ENCODE measurements at regions of chr5 and their contacts with region 1.

Region 1: DNA sequence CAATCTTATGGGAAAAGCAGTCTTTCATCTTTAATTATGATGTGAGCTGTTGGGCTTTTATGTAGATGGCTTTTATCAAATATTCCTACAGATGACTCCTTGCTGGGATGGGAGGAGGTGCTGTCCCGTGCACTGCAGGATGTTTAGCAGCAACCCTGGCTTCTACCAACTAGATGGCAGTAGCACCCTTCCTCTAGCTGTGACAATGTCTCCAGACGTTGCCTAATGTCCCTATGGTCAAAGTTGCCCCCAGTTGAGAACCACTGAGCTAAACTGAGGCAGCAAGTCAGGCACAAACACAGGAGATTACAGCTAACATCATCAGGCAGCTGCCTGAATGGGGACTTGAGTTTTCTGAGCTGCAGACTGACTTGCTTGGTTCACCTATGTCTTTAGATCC is 401.9 kb upstream of the PDE4D start:
- DNase-seq: peak; percentile 27
- H3K4me3 ChIP-seq: no peak overlapping the region
- H3K27ac ChIP-seq: no peak overlapping the region
- H3K4me1 ChIP-seq: no peaks in the 10 kb centered on the region
- H3K27me3 ChIP-seq: no peaks in the 10 kb centered on the region
- CTCF ChIP-seq: peak; percentile 69 to 91

Region 2: DNA sequence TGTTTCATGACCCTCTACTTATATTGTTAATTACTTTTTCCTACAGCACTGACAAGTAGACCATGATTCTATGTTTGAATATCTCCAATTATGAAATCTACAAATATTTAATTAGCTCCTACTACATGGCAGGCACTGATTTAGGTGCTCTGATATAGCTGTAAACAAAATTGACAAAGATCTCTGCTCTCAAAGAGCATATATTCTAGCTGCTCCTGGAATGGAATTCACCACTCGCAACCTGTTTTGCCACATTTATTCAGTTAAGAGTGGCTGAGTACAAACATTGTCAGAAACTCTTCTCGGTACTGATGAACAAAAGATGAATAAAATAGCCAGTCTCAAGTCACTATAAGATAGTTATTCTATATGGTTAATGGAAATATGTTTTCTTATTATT is 287.7 kb before region 1 on chr5:
- CTCF ChIA-PET with region 1: no interaction called
- dilution Hi-C with region 1: no loop called
- in situ Hi-C with region 1: no loop called
- intact Hi-C with region 1: no loop called
- DNase-seq: no peak
- H3K4me3 ChIP-seq: no peak overlapping the region
- H3K27ac ChIP-seq: no peak overlapping the region
- H3K4me1 ChIP-seq: no peaks in the 10 kb centered on the region
- H3K27me3 ChIP-seq: peaks cover 2% of the 10 kb centered on the region
- CTCF ChIP-seq: no peak

Region 3: DNA sequence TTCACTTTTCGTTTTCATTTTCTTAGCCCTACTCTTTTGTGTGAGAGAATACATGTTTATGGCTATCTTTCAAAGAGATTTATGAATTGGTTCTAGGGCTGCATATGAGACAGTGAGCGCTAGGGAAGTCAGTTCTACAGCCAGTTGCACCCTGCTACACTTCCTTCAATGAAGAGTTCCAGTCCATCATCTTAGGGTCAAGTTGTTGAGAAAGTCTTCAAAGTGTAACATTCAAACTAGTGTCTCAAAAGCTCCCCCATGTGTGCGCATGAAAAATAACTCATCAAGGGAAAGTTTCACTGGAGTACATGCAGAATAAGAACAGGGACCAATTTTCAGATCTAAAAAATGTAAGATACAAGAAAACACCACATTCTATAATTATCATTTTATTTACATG is 87.3 kb after region 1 on chr5:
- CTCF ChIA-PET with region 1: interaction called, 3 read pairs
- dilution Hi-C with region 1: no loop called
- in situ Hi-C with region 1: no loop called
- intact Hi-C with region 1: loop called (anchors 1 kb)
- DNase-seq: peak; percentile 29
- H3K4me3 ChIP-seq: no peak overlapping the region
- H3K27ac ChIP-seq: no peak overlapping the region
- H3K4me1 ChIP-seq: no peaks in the 10 kb centered on the region
- H3K27me3 ChIP-seq: peaks cover 3% of the 10 kb centered on the region
- CTCF ChIP-seq: peak; percentile 31 to 57

Region 4: DNA sequence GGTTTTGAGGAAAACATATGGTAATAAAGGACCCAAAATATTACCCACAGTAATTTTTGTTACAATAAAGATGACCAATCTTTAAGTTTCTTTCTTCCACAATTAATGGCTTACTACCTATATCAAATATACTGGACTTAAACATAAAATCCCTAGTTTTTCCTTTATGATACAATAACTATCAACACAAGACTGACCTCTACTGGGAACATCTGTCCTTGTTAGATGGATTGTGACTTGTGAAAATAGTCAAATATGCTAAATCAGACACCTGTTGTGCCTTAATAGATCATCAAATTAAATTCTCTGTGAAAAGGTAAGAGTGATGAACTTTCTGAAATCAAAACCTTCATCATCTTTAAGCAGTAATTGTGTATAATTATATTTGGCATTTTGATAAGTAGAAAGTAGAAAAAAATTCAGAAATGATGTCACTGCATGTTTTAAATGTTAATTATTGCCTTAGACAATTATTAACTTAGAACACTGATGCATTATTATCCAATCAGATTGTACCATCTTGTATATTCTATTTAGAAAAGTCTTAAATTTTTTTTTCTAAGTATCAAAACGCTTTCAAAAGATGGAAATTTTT is 291.0 kb after region 1 on chr5:
- CTCF ChIA-PET with region 1: no interaction called
- dilution Hi-C with region 1: no loop called
- in situ Hi-C with region 1: no loop called
- intact Hi-C with region 1: loop called (anchors 1 kb)
- DNase-seq: no peak
- H3K4me3 ChIP-seq: no peak overlapping the region
- H3K27ac ChIP-seq: no peak overlapping the region
- H3K4me1 ChIP-seq: no peaks in the 10 kb centered on the region
- H3K27me3 ChIP-seq: no peaks in the 10 kb centered on the region
- CTCF ChIP-seq: peak; percentile 14 to 50

Region 5: GRCh38 chr5:60649283-60649917 is 354.0 kb after region 1 on chr5:
- CTCF ChIA-PET with region 1: no interaction called
- dilution Hi-C with region 1: no loop called
- in situ Hi-C with region 1: no loop called
- intact Hi-C with region 1: loop called (anchors 1 kb)
- DNase-seq: peak; percentile 43
- H3K4me3 ChIP-seq: no peak overlapping the region
- H3K27ac ChIP-seq: no peak overlapping the region
- H3K4me1 ChIP-seq: peaks cover 7% of the 10 kb centered on the region
- H3K27me3 ChIP-seq: no peaks in the 10 kb centered on the region
- CTCF ChIP-seq: peak; percentile 72 to 76

Region 6: GRCh38 chr5:60668686-60669304 is 373.4 kb after region 1 on chr5:
- CTCF ChIA-PET with region 1: interaction called, 4 read pairs
- dilution Hi-C with region 1: no loop called
- in situ Hi-C with region 1: no loop called
- intact Hi-C with region 1: loop called (anchors 1 kb)
- DNase-seq: peak; percentile 28
- H3K4me3 ChIP-seq: no peak overlapping the region
- H3K27ac ChIP-seq: no peak overlapping the region
- H3K4me1 ChIP-seq: no peaks in the 10 kb centered on the region
- H3K27me3 ChIP-seq: no peaks in the 10 kb centered on the region
- CTCF ChIP-seq: peak; percentile 51 to 61